Activated B cell treated with CpG ODN at 0.5 μM for 24 hours (primary cell): ENCODE measurements at regions of chr12 and their contacts with region 1.

Region 1: GRCh38 chr12:120534203-120534702 is at the start of gene RNF10:
- DNase-seq: peak; percentile 66
- ATAC-seq: peak; percentile 68
- H3K4me3 Mint-ChIP-seq: peak within 1 kb of the TSS; percentile 93
- H3K27ac Mint-ChIP-seq: peak within 1 kb of the TSS; percentile 91
- H3K4me1 Mint-ChIP-seq: peaks cover 60% of the 10 kb centered on the region
- H3K27me3 Mint-ChIP-seq: no peaks in the 10 kb centered on the region
- CTCF ChIP-seq: no peak
- total RNA-seq, gene RNF10: 180 and 200 TPM in 2 replicates

Region 2: GRCh38 chr12:120356567-120357030 is 177.7 kb before region 1 on chr12:
- CTCF ChIA-PET with region 1: no interaction called
- POLR2A ChIA-PET with region 1: no interaction called
- intact Hi-C with region 1: loop called (anchors 1 kb)
- DNase-seq: peak; percentile 59
- ATAC-seq: peak; percentile 91
- H3K4me3 Mint-ChIP-seq: no peak overlapping the region
- H3K27ac Mint-ChIP-seq: no peak overlapping the region
- H3K4me1 Mint-ChIP-seq: peaks cover 3% of the 10 kb centered on the region
- H3K27me3 Mint-ChIP-seq: peaks cover 26% of the 10 kb centered on the region
- CTCF ChIP-seq: peak; percentile 22

Region 3: DNA sequence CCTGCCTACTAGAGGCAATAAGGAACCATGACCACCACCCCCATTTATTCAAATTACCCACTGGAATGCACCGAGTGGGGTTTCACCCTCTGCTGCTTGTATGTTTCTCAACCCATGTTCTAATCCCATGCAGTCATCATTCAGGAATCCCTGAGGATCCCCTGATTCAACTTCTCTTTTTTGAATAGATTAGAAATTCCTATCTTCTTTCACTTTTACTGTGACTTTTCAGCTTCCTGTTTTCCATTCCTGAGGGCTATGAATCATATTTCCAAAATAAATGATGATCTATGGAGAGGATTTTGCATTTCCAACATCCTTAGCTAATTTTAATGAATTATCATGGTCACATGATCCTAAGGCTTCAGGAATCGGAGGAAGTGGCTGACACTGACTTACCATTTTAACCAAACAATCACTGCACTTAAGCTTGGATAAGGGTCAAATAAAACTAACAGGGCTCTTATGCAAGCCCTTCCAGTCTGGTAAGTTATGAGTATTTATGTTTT is 656.3 kb after region 1 on chr12:
- CTCF ChIA-PET with region 1: no interaction called
- POLR2A ChIA-PET with region 1: no interaction called
- intact Hi-C with region 1: no loop called
- DNase-seq: no peak
- ATAC-seq: peak; percentile 68
- H3K4me3 Mint-ChIP-seq: no peak overlapping the region
- H3K27ac Mint-ChIP-seq: no peak overlapping the region
- H3K4me1 Mint-ChIP-seq: peaks cover 14% of the 10 kb centered on the region
- H3K27me3 Mint-ChIP-seq: no peaks in the 10 kb centered on the region
- CTCF ChIP-seq: no peak

Region 4: DNA sequence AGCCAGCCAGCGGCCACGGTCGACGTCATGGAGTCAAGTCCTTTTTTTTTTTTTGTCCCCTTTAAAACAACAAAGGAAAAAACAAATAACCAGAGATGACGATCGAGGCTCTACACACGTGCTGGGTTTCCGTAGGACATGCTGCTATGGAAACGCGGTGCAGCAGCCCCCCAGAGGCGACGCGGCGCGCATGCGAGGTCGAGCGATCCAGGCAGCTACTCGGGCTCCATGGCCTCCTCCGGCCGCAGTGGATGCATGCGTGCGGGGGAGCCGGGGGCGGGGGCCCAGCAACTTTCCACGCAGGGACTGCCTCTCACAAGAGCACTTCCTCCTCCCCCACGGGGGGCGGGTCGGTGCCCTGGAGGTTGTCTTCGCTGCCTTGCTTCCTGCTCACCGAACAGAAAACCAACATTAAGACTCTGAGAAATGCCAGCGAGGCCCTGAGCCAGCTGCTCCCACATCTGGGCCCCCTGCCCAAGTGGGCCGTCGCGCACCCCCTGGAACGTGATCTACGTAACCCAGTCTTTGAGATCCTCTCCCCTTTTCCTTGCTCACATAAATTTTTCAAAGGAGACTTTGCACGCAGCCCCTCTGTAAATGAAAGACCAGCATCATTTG is 706.3 kb after region 1 on chr12:
- CTCF ChIA-PET with region 1: no interaction called
- POLR2A ChIA-PET with region 1: no interaction called
- intact Hi-C with region 1: no loop called
- DNase-seq: peak; percentile 66
- ATAC-seq: peak; percentile 96
- H3K4me3 Mint-ChIP-seq: peak overlapping the region; percentile 75
- H3K27ac Mint-ChIP-seq: peak overlapping the region; percentile 89
- H3K4me1 Mint-ChIP-seq: peaks cover 30% of the 10 kb centered on the region
- H3K27me3 Mint-ChIP-seq: no peaks in the 10 kb centered on the region
- CTCF ChIP-seq: no peak